ENCODE measurements at regions of chr15 and their contacts with region 1.

Region 1: GRCh38 chr15:74635228-74635627 is 19.6 kb downstream of the CLK3 start:
- DNase-seq: peak in 1 of 2 donors; percentile 77
- ATAC-seq: peak; percentile 80

Region 2: GRCh38 chr15:74937596-74938296 is 302.5 kb after region 1 on chr15 and contains the start of gene COX5A:
- intact Hi-C with region 1: loop called in 1 of 2 experiments (anchors 10 kb)
- DNase-seq: peak; percentile 92 to 95
- ATAC-seq: peak; percentile 84
- total RNA-seq, gene COX5A: 564 to 684 TPM

Region 3: GRCh38 chr15:75112848-75113492 is 477.7 kb after region 1 on chr15:
- intact Hi-C with region 1: no loop called
- DNase-seq: no peak
- ATAC-seq: no peak

Measured in left colon (tissue), 2 donors.